Right ventricle myocardium superior (tissue), 1 donor: ENCODE measurements at regions of chr22 and their contacts with region 1.

Region 1: GRCh38 chr22:35479985-35480550 is 60.6 kb upstream of the RASD2 start:
- DNase-seq: peak; percentile 57
- ATAC-seq: peak; percentile 62

Region 2: GRCh38 chr22:35205961-35206360 is 274.1 kb before region 1 on chr22:
- intact Hi-C with region 1: no loop called
- DNase-seq: no peak
- ATAC-seq: no peak

Region 3: GRCh38 chr22:35292786-35293185 is 187.3 kb before region 1 on chr22:
- intact Hi-C with region 1: no loop called
- DNase-seq: no peak
- ATAC-seq: no peak

Region 4: DNA sequence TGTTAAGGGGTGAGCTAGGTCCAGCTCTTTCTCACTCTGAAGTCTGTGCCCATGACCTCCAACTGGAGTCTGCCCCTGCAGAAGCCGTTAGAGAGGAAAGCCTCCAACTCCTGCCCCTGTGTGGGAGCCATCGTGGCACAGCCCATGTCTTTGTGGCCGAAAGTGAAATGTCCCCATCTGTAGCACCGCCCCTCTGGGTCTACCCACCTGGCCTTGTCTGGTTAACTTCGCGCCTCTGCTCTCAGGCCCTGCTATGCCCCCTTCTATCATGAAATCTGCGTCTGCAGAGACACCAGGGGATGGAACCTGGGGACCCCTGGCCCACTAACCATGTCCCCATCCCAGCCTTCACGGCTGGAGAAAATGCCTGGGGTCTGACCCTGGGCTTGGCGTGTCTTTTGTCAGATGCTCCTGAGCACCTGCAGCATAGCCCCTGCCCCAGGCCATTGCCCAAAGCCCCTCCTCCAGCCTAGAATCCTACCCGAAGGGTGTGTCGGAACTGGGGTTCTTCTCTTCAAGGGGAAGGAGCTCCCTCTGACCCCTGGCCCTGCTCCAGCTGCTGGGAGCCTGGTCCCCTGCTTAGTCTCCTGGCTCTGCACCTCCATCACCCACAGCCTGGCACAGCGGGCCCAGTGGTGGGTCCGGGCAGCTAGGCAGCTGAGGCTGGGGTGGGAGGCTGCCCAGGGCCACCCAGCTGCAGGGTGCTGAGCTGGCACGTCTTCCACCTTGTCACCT is 134.9 kb before region 1 on chr22:
- intact Hi-C with region 1: no loop called
- DNase-seq: peak; percentile 35
- ATAC-seq: no peak

Region 5: DNA sequence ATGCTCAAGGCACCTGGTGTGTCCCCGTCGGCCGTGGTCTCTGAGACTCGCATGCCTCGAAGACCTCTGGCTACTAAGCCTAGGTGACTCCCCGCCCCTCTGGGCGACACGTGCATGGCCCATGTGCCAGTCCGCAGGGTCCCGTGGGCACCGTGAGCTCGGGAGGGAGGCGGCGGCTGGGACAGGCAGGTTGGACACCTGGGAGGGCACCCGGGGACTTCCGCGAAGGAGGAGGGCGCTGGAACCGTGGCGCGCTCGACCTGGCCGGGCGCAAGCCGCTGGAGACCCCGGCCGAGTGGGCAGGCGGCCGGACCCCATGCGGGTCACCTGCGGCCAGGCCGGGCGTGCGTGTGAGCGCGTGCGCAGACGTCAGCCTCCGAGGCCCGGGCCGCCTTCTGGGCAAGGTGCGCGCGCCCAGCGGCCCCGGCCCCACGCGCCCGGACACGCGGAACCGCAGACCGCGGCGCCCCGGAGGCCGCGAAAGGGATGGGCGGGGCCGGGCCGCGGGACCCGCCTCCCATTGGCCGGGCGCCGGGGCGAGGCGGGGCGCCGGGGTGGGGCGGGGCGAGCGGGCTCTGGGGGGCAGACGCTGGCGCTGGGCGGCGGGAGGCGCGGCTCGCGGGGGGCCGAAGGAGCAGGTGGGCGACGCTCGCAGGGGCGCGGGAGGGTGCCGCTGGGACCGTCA is 60.0 kb after region 1 on chr22:
- intact Hi-C with region 1: loop called (anchors 10 kb)
- DNase-seq: peak; percentile 73
- ATAC-seq: peak; percentile 88